Psoas muscle (tissue), 8 donors: ENCODE measurements at regions of chr9 and their contacts with region 1.

Region 1: GRCh38 chr9:121692606-121693387 is 41.4 kb downstream of the DAB2IP start:
- DNase-seq: peak in 1 of 2 donors; percentile 50
- ATAC-seq: peak; percentile 76 to 87 (median 79)
- H3K4me3 ChIP-seq: no peak overlapping the region
- H3K27ac ChIP-seq: peak overlapping the region; percentile 64
- H3K4me1 ChIP-seq: peaks cover 20% of the 10 kb centered on the region
- H3K27me3 ChIP-seq: no peaks in the 10 kb centered on the region
- CTCF ChIP-seq: no peak

Region 2: DNA sequence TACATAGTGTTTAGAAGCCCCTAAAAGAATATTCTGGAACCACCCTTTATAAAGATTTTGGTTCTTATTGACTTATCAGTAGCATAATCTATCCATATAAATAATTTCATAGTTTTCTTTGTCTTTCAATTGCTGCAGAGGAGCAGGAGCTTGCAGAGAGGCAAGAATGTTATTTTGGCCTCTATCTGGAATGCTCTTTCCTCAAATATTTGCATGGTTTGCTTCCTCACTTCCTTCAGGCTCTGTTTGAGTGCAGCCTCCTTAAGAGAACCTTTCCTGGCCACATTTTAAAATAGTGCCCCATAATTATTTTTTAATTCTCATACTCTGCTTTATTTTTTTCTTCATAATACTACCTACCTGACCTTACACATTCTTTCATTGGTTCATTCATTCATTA is 644.2 kb before region 1 on chr9:
- intact Hi-C with region 1: no loop called
- DNase-seq: no peak
- ATAC-seq: no peak
- H3K4me3 ChIP-seq: no peak overlapping the region
- H3K27ac ChIP-seq: no peak overlapping the region
- H3K4me1 ChIP-seq: no peaks in the 10 kb centered on the region
- H3K27me3 ChIP-seq: no peaks in the 10 kb centered on the region
- CTCF ChIP-seq: no peak

Region 3: GRCh38 chr9:121640076-121640475 is 52.7 kb before region 1 on chr9:
- intact Hi-C with region 1: loop called in 1 of 2 experiments (anchors 2 kb)
- DNase-seq: peak; percentile 74 to 84
- ATAC-seq: peak; percentile 76 to 81 (median 79)
- H3K4me3 ChIP-seq: no peak overlapping the region
- H3K27ac ChIP-seq: peak overlapping the region; percentile 65
- H3K4me1 ChIP-seq: peaks cover 60% of the 10 kb centered on the region
- H3K27me3 ChIP-seq: no peaks in the 10 kb centered on the region
- CTCF ChIP-seq: peak; percentile 67